Mammary epithelial cell (primary cell): ENCODE measurements at regions of chr2 and their contacts with region 1.

Region 1: DNA sequence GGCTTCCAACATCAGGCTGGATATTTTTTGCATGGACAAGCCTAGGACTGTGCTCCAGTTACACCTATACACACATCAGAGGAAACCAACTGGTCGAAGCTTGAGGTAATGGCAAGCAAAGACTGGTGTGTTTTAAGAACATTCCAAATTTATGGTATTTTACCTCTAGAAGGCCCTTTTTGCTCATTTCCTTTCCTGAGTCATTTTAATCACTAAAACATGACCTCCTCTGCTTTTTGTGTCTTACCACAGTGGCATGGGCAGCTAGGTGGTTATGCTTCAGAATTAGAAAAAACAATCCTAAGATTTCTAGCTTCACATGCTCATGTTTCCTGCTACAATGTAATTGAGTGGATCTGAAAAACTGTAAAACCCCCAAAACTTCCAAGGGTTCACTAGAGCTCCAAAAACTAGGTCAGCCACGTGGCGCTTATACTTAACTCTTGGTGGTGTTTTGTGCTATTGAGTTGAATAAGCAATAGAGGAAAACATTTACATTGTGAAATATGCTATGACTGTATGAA is 30.6 kb upstream of the CHRNA1 start:
- DNase-seq: no peak
- H3K4me3 ChIP-seq: no peak overlapping the region
- H3K27ac ChIP-seq: no peak overlapping the region
- H3K4me1 ChIP-seq: no peaks in the 10 kb centered on the region
- H3K27me3 ChIP-seq: no peaks in the 10 kb centered on the region
- CTCF ChIP-seq: no peak

Region 2: GRCh38 chr2:174833737-174834136 is 38.8 kb after region 1 on chr2:
- CTCF ChIA-PET with region 1: no interaction called
- dilution Hi-C with region 1: no loop called
- in situ Hi-C with region 1: no loop called
- intact Hi-C with region 1: loop called (anchors 1 kb)
- DNase-seq: peak; percentile 53
- H3K4me3 ChIP-seq: no peak overlapping the region
- H3K27ac ChIP-seq: peak overlapping the region; percentile 96
- H3K4me1 ChIP-seq: peaks cover 33% of the 10 kb centered on the region
- H3K27me3 ChIP-seq: no peaks in the 10 kb centered on the region
- CTCF ChIP-seq: no peak

Region 3: GRCh38 chr2:174881678-174882077 is 86.8 kb after region 1 on chr2:
- CTCF ChIA-PET with region 1: no interaction called
- dilution Hi-C with region 1: loop called (anchors 5 kb)
- in situ Hi-C with region 1: no loop called
- intact Hi-C with region 1: no loop called
- DNase-seq: no peak
- H3K4me3 ChIP-seq: no peak overlapping the region
- H3K27ac ChIP-seq: no peak overlapping the region
- H3K4me1 ChIP-seq: peaks cover 3% of the 10 kb centered on the region
- H3K27me3 ChIP-seq: no peaks in the 10 kb centered on the region
- CTCF ChIP-seq: no peak

Region 4: GRCh38 chr2:174951745-174952144 is 156.8 kb after region 1 on chr2:
- CTCF ChIA-PET with region 1: no interaction called
- dilution Hi-C with region 1: no loop called
- in situ Hi-C with region 1: no loop called
- intact Hi-C with region 1: no loop called
- DNase-seq: peak; percentile 8
- H3K4me3 ChIP-seq: no peak overlapping the region
- H3K27ac ChIP-seq: no peak overlapping the region
- H3K4me1 ChIP-seq: no peaks in the 10 kb centered on the region
- H3K27me3 ChIP-seq: no peaks in the 10 kb centered on the region
- CTCF ChIP-seq: no peak